Activated T-helper 2 cell treated with anti-CD3 and anti-CD28 coated beads, Interferon-gamma antibody, Interleukin-2, Interleukin-4, amounts not matched to agents 10 μg/mL and 5 μg/mL and 100 μg/mL, durations not matched to agents 14 hours and 24 hours and 36 hours (primary cell): ENCODE measurements at regions of chr1 and their contacts with region 1.

Region 1: GRCh38 chr1:119286587-119287181 is 81.9 kb upstream of the HAO2 start:
- DNase-seq: peak; percentile 9
- H3K4me3 Mint-ChIP-seq: no peak overlapping the region
- H3K27ac Mint-ChIP-seq: no peak overlapping the region
- H3K4me1 Mint-ChIP-seq: no peaks in the 10 kb centered on the region
- H3K27me3 Mint-ChIP-seq: peaks cover 11% of the 10 kb centered on the region

Region 2: GRCh38 chr1:119245881-119246280 is 40.8 kb before region 1 on chr1:
- intact Hi-C with region 1: no loop called
- DNase-seq: no peak
- H3K4me3 Mint-ChIP-seq: no peak overlapping the region
- H3K27ac Mint-ChIP-seq: no peak overlapping the region
- H3K4me1 Mint-ChIP-seq: no peaks in the 10 kb centered on the region
- H3K27me3 Mint-ChIP-seq: no peaks in the 10 kb centered on the region

Region 3: GRCh38 chr1:119310301-119310700 is 23.6 kb after region 1 on chr1:
- intact Hi-C with region 1: no loop called
- DNase-seq: no peak
- H3K4me3 Mint-ChIP-seq: no peak overlapping the region
- H3K27ac Mint-ChIP-seq: no peak overlapping the region
- H3K4me1 Mint-ChIP-seq: no peaks in the 10 kb centered on the region
- H3K27me3 Mint-ChIP-seq: peaks cover 26% of the 10 kb centered on the region

Region 4: GRCh38 chr1:119367427-119368124 is 80.9 kb after region 1 on chr1:
- intact Hi-C with region 1: loop called (anchors 2 kb)
- DNase-seq: no peak
- H3K4me3 Mint-ChIP-seq: no peak overlapping the region
- H3K27ac Mint-ChIP-seq: no peak overlapping the region
- H3K4me1 Mint-ChIP-seq: no peaks in the 10 kb centered on the region
- H3K27me3 Mint-ChIP-seq: peaks cover 12% of the 10 kb centered on the region

Region 5: DNA sequence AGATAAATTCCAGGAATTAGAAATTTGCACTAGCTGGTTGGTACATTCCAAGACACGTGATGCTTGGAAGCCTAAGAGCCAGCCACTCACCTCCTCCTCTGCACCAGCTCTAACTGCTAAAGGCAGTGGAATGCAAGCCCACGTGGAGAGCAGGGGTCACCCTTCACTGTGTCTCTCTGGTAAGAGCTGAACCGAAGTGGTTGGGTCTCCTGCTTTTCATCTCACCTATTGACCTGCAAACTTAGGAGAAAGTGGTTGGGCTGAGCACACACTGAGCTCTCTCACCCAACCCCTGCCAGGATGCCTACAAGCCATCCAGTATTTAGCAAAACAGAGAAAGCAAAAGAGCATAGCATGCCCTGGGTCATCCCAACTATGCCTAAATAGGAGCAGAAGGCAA is 101.2 kb after region 1 on chr1:
- intact Hi-C with region 1: no loop called
- DNase-seq: no peak
- H3K4me3 Mint-ChIP-seq: no peak overlapping the region
- H3K27ac Mint-ChIP-seq: no peak overlapping the region
- H3K4me1 Mint-ChIP-seq: no peaks in the 10 kb centered on the region
- H3K27me3 Mint-ChIP-seq: no peaks in the 10 kb centered on the region